Activated naive CD8-positive, alpha-beta T cell treated with anti-CD3 and anti-CD28 coated beads, Interleukin-2, amount 10 ng/mL, durations not matched to agents 7 days and 5 days (primary cell): ENCODE measurements at regions of chr15 and their contacts with region 1.

Region 1: GRCh38 chr15:75367913-75368688 is at the start of gene MAN2C1:
- DNase-seq: peak; percentile 94
- ATAC-seq: peak; percentile 91
- H3K4me3 Mint-ChIP-seq: peak within 1 kb of the TSS; percentile 89
- H3K27ac Mint-ChIP-seq: peak within 1 kb of the TSS; percentile 91
- H3K4me1 Mint-ChIP-seq: peaks cover 22% of the 10 kb centered on the region
- H3K27me3 Mint-ChIP-seq: no peaks in the 10 kb centered on the region
- total RNA-seq, gene MAN2C1: 232 to 235 TPM

Region 2: GRCh38 chr15:75347222-75347878 is 20.8 kb before region 1 on chr15:
- POLR2A ChIA-PET with region 1: interaction called, 10 read pairs
- DNase-seq: peak; percentile 57
- ATAC-seq: peak; percentile 42
- H3K4me3 Mint-ChIP-seq: peak overlapping the region; percentile 70
- H3K27ac Mint-ChIP-seq: peak overlapping the region; percentile 73
- H3K4me1 Mint-ChIP-seq: peaks cover 17% of the 10 kb centered on the region
- H3K27me3 Mint-ChIP-seq: peaks cover 18% of the 10 kb centered on the region

Region 3: DNA sequence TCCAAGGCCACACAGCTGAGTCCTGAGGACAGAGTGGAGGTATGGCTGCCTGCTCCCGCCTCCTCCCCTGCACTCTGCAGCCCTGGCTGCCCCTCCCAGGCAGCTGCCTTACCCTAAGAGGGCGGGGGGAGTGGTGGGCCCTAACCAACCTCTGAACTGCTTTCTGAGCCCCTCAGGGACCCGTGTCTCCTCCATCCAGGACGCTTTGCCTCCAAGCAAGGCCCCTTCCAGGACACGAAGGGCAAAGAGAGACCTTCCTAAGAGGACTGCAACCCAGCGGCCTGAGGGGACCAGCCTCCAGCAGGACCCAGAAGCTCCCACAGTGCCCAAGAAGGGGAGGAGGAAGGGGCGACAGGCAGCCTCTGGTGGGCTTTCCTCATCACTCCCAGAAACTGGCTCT is 13.6 kb before region 1 on chr15:
- POLR2A ChIA-PET with region 1: interaction called, 15 read pairs
- DNase-seq: no peak
- ATAC-seq: no peak
- H3K4me3 Mint-ChIP-seq: no peak overlapping the region
- H3K27ac Mint-ChIP-seq: peak overlapping the region; percentile 22
- H3K4me1 Mint-ChIP-seq: peaks cover 13% of the 10 kb centered on the region
- H3K27me3 Mint-ChIP-seq: no peaks in the 10 kb centered on the region